Endothelial cell of umbilical vein (primary cell): ENCODE measurements at regions of chr1 and their contacts with region 1.

Region 1: GRCh38 chr1:185317034-185317885 is at the start of gene IVNS1ABP:
- DNase-seq: peak; percentile 96
- H3K4me3 ChIP-seq: peak within 1 kb of the TSS; percentile 66 to 98 (median 94)
- H3K27ac ChIP-seq: peak within 1 kb of the TSS; percentile 87
- H3K4me1 ChIP-seq: peaks cover 36% of the 10 kb centered on the region
- H3K27me3 ChIP-seq: no peaks in the 10 kb centered on the region
- CTCF ChIP-seq: peak in 1 of 2 donors; percentile 19
- POLR2A ChIP-seq: peak; percentile 96
- total RNA-seq, gene IVNS1ABP: 75.3 and 81.6 TPM in 2 replicates

Region 2: DNA sequence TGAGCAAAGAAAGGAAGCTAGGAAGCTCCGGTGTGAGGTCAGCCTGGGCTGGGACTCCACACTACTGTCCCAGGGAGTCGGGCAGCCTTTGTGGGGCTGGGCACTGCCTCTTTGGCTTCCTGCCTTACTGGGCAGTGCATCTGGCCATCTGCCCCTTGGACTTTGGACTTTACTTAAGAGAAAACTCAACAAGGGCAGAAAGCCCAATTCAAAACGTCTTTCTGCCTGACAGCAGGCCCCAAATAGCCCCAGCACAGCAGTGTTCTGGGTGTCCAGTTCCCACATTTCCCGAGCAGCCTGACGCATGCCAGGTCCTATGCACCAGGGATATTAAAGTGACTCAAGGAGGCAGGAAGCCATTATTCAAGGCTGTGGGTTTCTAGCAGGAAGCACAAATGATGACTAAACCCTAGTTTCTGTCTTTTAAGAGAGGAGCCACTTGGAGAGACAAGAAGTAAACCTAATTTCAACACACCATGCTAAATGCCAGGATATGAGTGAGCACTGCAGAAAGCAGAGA is 524.8 kb before region 1 on chr1:
- CTCF ChIA-PET with region 1: no interaction called
- POLR2A ChIA-PET with region 1: no interaction called
- dilution Hi-C with region 1: no loop called
- intact Hi-C with region 1: loop called (anchors 1 kb)
- DNase-seq: peak; percentile 90
- H3K4me3 ChIP-seq: no peak overlapping the region
- H3K27ac ChIP-seq: peak overlapping the region; percentile 96
- H3K4me1 ChIP-seq: peaks cover 22% of the 10 kb centered on the region
- H3K27me3 ChIP-seq: no peaks in the 10 kb centered on the region
- CTCF ChIP-seq: no peak
- POLR2A ChIP-seq: no peak

Region 3: DNA sequence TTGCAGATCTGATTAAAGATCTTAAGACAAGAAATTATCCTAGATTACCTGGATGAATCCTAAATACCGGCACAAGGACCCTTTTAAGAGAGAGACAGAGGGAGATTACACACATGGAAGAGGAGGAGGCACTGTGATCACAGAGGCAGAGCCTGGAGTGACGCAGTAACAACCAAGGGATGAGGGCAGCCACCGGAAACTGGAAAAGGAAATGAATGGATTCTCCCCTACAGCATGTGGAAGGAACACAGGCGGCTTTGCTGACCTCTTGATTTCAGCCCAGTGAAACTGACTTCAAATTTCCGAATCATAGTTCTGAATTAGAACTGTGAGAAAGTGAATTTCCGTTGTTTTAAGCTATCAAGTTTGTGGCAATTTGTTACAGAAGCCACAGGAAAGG is 50.0 kb after region 1 on chr1:
- CTCF ChIA-PET with region 1: interaction called, 17 read pairs
- POLR2A ChIA-PET with region 1: no interaction called
- dilution Hi-C with region 1: no loop called
- intact Hi-C with region 1: loop called (anchors 2 kb)
- DNase-seq: peak; percentile 85
- H3K4me3 ChIP-seq: peak overlapping the region in 1 of 3 experiments; percentile 17
- H3K27ac ChIP-seq: peak overlapping the region; percentile 82
- H3K4me1 ChIP-seq: peaks cover 27% of the 10 kb centered on the region
- H3K27me3 ChIP-seq: no peaks in the 10 kb centered on the region
- CTCF ChIP-seq: no peak
- POLR2A ChIP-seq: peak; percentile 36

Region 4: GRCh38 chr1:185393815-185394214 is 76.6 kb after region 1 on chr1:
- CTCF ChIA-PET with region 1: no interaction called
- POLR2A ChIA-PET with region 1: no interaction called
- dilution Hi-C with region 1: no loop called
- intact Hi-C with region 1: no loop called
- DNase-seq: no peak
- H3K4me3 ChIP-seq: no peak overlapping the region
- H3K27ac ChIP-seq: no peak overlapping the region
- H3K4me1 ChIP-seq: no peaks in the 10 kb centered on the region
- H3K27me3 ChIP-seq: no peaks in the 10 kb centered on the region
- CTCF ChIP-seq: no peak
- POLR2A ChIP-seq: no peak

Region 5: GRCh38 chr1:185453496-185454192 is 136.4 kb after region 1 on chr1:
- CTCF ChIA-PET with region 1: no interaction called
- POLR2A ChIA-PET with region 1: no interaction called
- dilution Hi-C with region 1: no loop called
- intact Hi-C with region 1: loop called (anchors 5 kb)
- DNase-seq: no peak
- H3K4me3 ChIP-seq: no peak overlapping the region
- H3K27ac ChIP-seq: no peak overlapping the region
- H3K4me1 ChIP-seq: peaks cover 3% of the 10 kb centered on the region
- H3K27me3 ChIP-seq: no peaks in the 10 kb centered on the region
- CTCF ChIP-seq: no peak
- POLR2A ChIP-seq: no peak

Region 6: DNA sequence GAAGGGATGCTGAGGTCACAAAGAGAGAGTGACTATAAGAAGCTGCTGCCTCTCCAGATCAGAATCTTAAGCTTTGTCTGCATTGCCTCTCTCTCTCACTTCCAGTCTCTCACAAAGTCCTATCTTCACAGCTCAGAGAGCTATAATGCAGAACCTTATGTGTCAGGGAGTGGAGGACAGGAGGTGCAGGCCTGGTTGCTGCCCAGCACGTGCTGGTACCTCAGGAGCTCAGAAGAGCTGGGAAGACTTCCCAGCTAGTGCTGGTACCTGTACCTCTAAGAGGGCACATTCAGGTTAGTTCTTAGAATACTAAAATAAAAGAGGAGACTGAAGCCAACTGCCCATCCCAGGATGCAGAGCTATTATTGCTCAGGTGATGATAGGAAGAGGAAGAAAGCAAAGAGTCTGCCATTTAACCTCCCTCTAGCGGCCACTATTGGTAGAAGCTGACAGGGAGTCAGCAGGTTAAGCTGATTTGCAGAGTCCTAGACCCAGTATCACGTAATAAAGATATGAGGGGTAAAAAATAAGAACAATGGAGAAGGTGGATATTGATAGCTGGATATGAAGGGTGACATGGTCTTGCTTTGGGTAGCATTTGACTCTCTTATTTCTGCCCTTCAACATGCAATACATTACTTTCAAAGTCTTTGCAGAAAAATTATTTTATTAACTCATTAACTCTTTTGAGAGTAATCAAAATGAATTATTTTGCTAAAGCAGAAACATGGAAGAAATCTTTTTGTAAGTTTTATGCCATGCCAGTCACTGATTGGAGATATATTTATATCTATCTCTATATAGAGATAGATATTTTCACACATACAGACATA is 278.8 kb after region 1 on chr1:
- CTCF ChIA-PET with region 1: interaction called, 28 read pairs
- POLR2A ChIA-PET with region 1: interaction called, 9 read pairs
- dilution Hi-C with region 1: no loop called
- intact Hi-C with region 1: loop called (anchors 1 kb)
- DNase-seq: peak; percentile 45
- H3K4me3 ChIP-seq: no peak overlapping the region
- H3K27ac ChIP-seq: no peak overlapping the region
- H3K4me1 ChIP-seq: no peaks in the 10 kb centered on the region
- H3K27me3 ChIP-seq: no peaks in the 10 kb centered on the region
- CTCF ChIP-seq: peak; percentile 50 to 55
- POLR2A ChIP-seq: no peak

Region 7: GRCh38 chr1:185681034-185681633 is 363.9 kb after region 1 on chr1:
- CTCF ChIA-PET with region 1: interaction called, 38 read pairs
- POLR2A ChIA-PET with region 1: interaction called, 3 read pairs
- dilution Hi-C with region 1: no loop called
- intact Hi-C with region 1: loop called (anchors 1 kb)
- DNase-seq: peak; percentile 64
- H3K4me3 ChIP-seq: no peak overlapping the region
- H3K27ac ChIP-seq: no peak overlapping the region
- H3K4me1 ChIP-seq: peaks cover 8% of the 10 kb centered on the region
- H3K27me3 ChIP-seq: no peaks in the 10 kb centered on the region
- CTCF ChIP-seq: peak; percentile 48 to 50
- POLR2A ChIP-seq: no peak